ENCODE measurements at regions of chr15 and their contacts with region 1.

Region 1: GRCh38 chr15:78049691-78050440 is 27.6 kb downstream of the TBC1D2B start:
- DNase-seq: peak; percentile 95
- H3K4me3 ChIP-seq: no peak overlapping the region
- H3K27me3 ChIP-seq: no peaks in the 10 kb centered on the region
- CTCF ChIP-seq: no peak

Region 2: GRCh38 chr15:77807115-77807514 is 242.8 kb before region 1 on chr15:
- CTCF ChIA-PET with region 1: no interaction called
- POLR2A ChIA-PET with region 1: no interaction called
- DNase-seq: no peak
- H3K4me3 ChIP-seq: no peak overlapping the region
- H3K27me3 ChIP-seq: peaks cover 2% of the 10 kb centered on the region; the same call in 1 of the 2 replicates
- CTCF ChIP-seq: no peak

Region 3: GRCh38 chr15:78065973-78066946 is 16.4 kb after region 1 on chr15:
- CTCF ChIA-PET with region 1: interaction called, 13 read pairs
- POLR2A ChIA-PET with region 1: interaction called, 5 read pairs
- DNase-seq: no peak
- H3K4me3 ChIP-seq: no peak overlapping the region
- H3K27me3 ChIP-seq: no peaks in the 10 kb centered on the region
- CTCF ChIP-seq: no peak

Region 4: GRCh38 chr15:78618490-78618934 is 568.6 kb after region 1 on chr15:
- CTCF ChIA-PET with region 1: no interaction called
- POLR2A ChIA-PET with region 1: no interaction called
- DNase-seq: peak; percentile 70
- H3K4me3 ChIP-seq: no peak overlapping the region
- H3K27me3 ChIP-seq: peaks cover 26% of the 10 kb centered on the region
- CTCF ChIP-seq: peak; percentile 79